SK-N-SH (cell line): ENCODE measurements at regions of chr6 and their contacts with region 1.

Region 1: DNA sequence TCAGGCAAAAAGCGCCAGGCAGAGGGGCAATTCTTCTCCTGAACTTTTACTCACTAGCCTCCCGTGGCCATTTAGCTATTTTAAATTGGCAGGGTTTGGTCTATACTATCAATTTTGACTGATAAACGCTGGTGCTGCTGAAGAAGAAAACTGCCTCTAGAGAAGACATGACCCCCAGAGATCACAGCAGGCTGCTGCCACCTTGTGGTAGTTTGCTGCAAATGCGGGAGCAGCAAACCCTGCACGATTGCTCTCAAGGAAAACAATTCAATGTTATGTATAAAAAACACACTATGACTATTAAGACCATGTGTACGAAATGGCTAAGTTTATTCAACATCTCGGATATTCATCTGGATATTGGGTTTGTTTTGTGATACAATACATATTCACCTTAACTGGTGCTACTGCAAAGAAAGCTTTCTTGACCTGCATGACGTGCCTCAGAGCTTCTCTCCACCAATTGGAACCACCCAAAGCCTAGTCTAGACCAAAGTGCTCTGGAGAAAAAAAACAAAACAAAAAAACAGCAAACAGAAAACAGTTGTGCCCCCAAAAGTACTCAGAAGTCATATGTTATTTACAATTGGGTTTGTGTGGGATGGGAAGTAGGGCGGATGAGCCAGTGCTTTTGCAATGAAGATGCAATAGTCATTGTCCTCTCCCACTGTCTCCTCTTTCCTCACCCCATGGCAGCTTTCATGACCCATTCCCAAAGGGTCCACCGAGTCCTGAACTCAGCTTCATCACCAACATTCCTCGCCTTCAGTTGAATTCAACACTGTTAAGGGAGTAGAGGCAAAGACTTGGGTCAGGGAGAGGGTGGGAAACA is 19.6 kb upstream of the IL17F start:
- DNase-seq: peak; percentile 66
- H3K4me3 ChIP-seq: no peak overlapping the region
- H3K27ac ChIP-seq: no peak overlapping the region
- H3K4me1 ChIP-seq: peaks cover 0 to 2% of the 10 kb centered on the region in 2 experiments; a peak in 1 of 4 replicates
- H3K27me3 ChIP-seq: no peaks in the 10 kb centered on the region
- CTCF ChIP-seq: peak; percentile 98
- EP300 ChIP-seq: no peak
- RAD21 ChIP-seq: peak; percentile 87

Region 2: GRCh38 chr6:52098634-52099185 is 165.2 kb before region 1 on chr6:
- CTCF ChIA-PET with region 1: interaction called, 13 read pairs
- POLR2A ChIA-PET with region 1: no interaction called
- DNase-seq: peak; percentile 47
- H3K4me3 ChIP-seq: no peak overlapping the region
- H3K27ac ChIP-seq: no peak overlapping the region
- H3K4me1 ChIP-seq: no peaks in the 10 kb centered on the region; a peak in 1 of 4 replicates
- H3K27me3 ChIP-seq: no peaks in the 10 kb centered on the region; the same call in 1 of the 2 replicates
- CTCF ChIP-seq: peak; percentile 32
- EP300 ChIP-seq: no peak
- RAD21 ChIP-seq: peak; percentile 61

Region 3: DNA sequence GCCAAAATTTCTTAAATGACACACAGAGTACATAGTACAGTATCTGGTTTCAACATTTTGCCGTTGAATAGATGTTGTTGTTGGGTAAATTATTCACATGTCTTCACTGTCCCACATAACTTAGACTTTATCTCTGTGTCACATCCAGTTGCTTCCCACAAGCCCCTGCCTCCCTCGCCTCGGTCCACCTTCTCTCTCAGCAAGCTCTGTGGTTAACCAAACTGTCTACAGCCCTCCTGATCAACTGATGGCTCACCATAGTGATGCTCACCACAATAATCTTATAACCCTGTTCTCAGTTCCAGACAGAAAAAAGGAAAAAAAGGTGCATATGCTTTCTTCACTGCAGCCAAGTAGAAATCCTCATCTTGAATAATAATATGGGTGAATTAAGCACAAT is 42.6 kb before region 1 on chr6:
- CTCF ChIA-PET with region 1: no interaction called
- POLR2A ChIA-PET with region 1: no interaction called
- DNase-seq: no peak
- H3K4me3 ChIP-seq: no peak overlapping the region; a peak in 1 of 4 replicates
- H3K27ac ChIP-seq: no peak overlapping the region
- H3K4me1 ChIP-seq: no peaks in the 10 kb centered on the region
- H3K27me3 ChIP-seq: no peaks in the 10 kb centered on the region; the same call in 1 of the 2 replicates
- CTCF ChIP-seq: no peak
- EP300 ChIP-seq: no peak
- RAD21 ChIP-seq: no peak

Region 4: GRCh38 chr6:52233975-52234823 is 29.7 kb before region 1 on chr6:
- CTCF ChIA-PET with region 1: interaction called, 31 read pairs
- POLR2A ChIA-PET with region 1: no interaction called
- DNase-seq: peak; percentile 53
- H3K4me3 ChIP-seq: no peak overlapping the region; a peak in 1 of 4 replicates
- H3K27ac ChIP-seq: no peak overlapping the region
- H3K4me1 ChIP-seq: no peaks in the 10 kb centered on the region
- H3K27me3 ChIP-seq: no peaks in the 10 kb centered on the region; the same call in 1 of the 2 replicates
- CTCF ChIP-seq: peak; percentile 56
- EP300 ChIP-seq: no peak
- RAD21 ChIP-seq: peak; percentile 74

Region 5: DNA sequence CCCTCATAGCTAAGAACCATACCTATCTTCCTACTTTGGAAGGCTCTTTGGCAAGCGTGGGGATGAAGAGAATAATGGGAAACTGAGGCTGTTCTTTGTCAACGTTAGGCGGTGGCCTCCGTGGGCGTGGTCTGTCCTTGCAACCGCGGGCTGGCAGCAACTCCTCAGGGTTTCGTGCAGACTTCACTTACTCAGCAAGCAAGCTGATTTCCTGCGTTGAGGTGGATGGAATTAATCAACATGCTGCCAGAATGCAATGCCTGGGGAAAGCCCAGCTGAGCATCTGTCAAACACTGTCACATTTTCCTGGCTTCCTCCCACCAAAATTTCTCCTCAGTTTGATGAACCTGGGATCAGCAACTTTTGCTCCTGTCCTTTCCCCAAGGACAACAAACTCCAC is 10.4 kb before region 1 on chr6:
- CTCF ChIA-PET with region 1: interaction called, 36 read pairs
- POLR2A ChIA-PET with region 1: no interaction called
- DNase-seq: no peak
- H3K4me3 ChIP-seq: no peak overlapping the region
- H3K27ac ChIP-seq: no peak overlapping the region
- H3K4me1 ChIP-seq: no peaks in the 10 kb centered on the region; a peak in 1 of 4 replicates
- H3K27me3 ChIP-seq: peaks cover 49% of the 10 kb centered on the region; the same call in 1 of the 2 replicates
- CTCF ChIP-seq: no peak
- EP300 ChIP-seq: no peak
- RAD21 ChIP-seq: no peak

Region 6: GRCh38 chr6:52399511-52400312 is 135.8 kb after region 1 on chr6:
- CTCF ChIA-PET with region 1: interaction called, 11 read pairs
- POLR2A ChIA-PET with region 1: no interaction called
- DNase-seq: peak; percentile 70
- H3K4me3 ChIP-seq: no peak overlapping the region; a peak in 1 of 4 replicates
- H3K27ac ChIP-seq: no peak overlapping the region; a peak in 1 of 4 replicates
- H3K4me1 ChIP-seq: peaks cover 6 to 16% of the 10 kb centered on the region in 2 experiments; a peak in 2 of 4 replicates
- H3K27me3 ChIP-seq: no peaks in the 10 kb centered on the region
- CTCF ChIP-seq: peak; percentile 89
- EP300 ChIP-seq: no peak
- RAD21 ChIP-seq: peak; percentile 91

Region 7: GRCh38 chr6:53313784-53314400 is 1050.0 kb after region 1 on chr6:
- CTCF ChIA-PET with region 1: no interaction called
- POLR2A ChIA-PET with region 1: no interaction called
- DNase-seq: no peak
- H3K4me3 ChIP-seq: no peak overlapping the region; a peak in 1 of 4 replicates
- H3K27ac ChIP-seq: peak overlapping the region; percentile 36 to 61
- H3K4me1 ChIP-seq: peaks cover 40% of the 10 kb centered on the region in 2 experiments
- H3K27me3 ChIP-seq: no peaks in the 10 kb centered on the region
- CTCF ChIP-seq: no peak
- EP300 ChIP-seq: peak in 1 of 2 experiments; percentile 58; a peak in 1 of 4 replicates
- RAD21 ChIP-seq: no peak